ENCODE measurements at regions of chr9 and their contacts with region 1.

Region 1: GRCh38 chr9:20242510-20243189 is 379.6 kb downstream of the MLLT3 start:
- DNase-seq: peak; percentile 43
- ATAC-seq: peak; percentile 84
- H3K4me3 Mint-ChIP-seq: peak overlapping the region; percentile 14
- H3K27ac Mint-ChIP-seq: peak overlapping the region; percentile 80
- H3K4me1 Mint-ChIP-seq: peaks cover 76% of the 10 kb centered on the region
- H3K27me3 Mint-ChIP-seq: no peaks in the 10 kb centered on the region

Region 2: DNA sequence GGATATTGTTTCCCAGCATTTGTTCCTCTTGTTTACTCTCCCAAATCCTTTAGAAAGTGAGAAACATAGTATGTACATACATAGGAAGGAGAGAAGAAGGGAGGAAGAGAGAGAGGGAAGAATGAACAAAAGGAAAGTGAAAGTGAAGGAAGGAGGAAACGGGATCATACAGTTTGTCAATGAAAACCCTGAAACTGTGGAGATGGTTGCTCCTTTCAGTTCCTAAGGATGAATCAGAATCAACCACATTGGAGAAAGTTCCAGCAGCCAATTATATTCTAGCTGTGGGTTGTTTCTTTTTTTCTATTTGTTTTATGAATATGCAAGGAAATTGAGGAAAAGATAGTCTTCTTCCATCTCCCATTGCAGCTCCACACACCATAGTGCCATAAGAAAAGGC is 16.8 kb before region 1 on chr9:
- POLR2A ChIA-PET with region 1: interaction called, 27 read pairs
- DNase-seq: no peak
- ATAC-seq: no peak
- H3K4me3 Mint-ChIP-seq: peak overlapping the region; percentile 68
- H3K27ac Mint-ChIP-seq: peak overlapping the region; percentile 80
- H3K4me1 Mint-ChIP-seq: peaks cover 57% of the 10 kb centered on the region
- H3K27me3 Mint-ChIP-seq: no peaks in the 10 kb centered on the region

Measured in activated naive CD8-positive, alpha-beta T cell treated with anti-CD3 and anti-CD28 coated beads, Interleukin-2, amount 10 ng/mL, durations not matched to agents 7 days and 5 days (primary cell).